ENCODE measurements at regions of chr12 and their contacts with region 1.

Region 1: DNA sequence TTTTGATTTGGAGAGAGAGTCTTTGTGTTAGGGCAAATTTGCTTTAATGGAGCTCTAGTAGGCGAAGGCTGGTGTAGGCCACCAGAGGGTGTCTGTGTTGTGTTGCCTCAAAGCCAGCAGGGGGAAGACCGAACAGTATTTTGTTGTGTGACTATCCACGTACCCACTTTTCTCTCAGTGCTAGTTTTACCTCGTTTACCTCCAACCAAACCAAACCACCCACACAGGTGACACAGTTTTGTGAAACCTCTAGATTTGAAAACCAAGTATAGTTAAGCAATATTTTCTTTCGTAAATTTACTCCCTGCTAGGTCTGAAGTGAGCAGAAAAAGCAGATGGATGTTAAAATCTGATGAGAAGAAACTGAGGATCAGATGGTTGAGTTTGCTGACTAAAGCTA is 36.3 kb upstream of the NPFF start:
- DNase-seq: peak; percentile 47 to 90 (median 75)

Region 2: GRCh38 chr12:53625946-53626701 is 82.6 kb after region 1 on chr12 and contains the start of gene ATF7:
- intact Hi-C with region 1: loop called (anchors 10 kb)
- DNase-seq: peak; percentile 95 to 99 (median 98)

Region 3: GRCh38 chr12:53675651-53676453 is 132.3 kb after region 1 on chr12 and contains the start of gene ATP5MC2:
- intact Hi-C with region 1: loop called (anchors 5 kb)
- DNase-seq: peak; percentile 94 to 99 (median 98)

Region 4: GRCh38 chr12:53746592-53747092 is 203.1 kb after region 1 on chr12:
- intact Hi-C with region 1: loop called (anchors 10 kb)
- DNase-seq: peak; percentile 89 to 98 (median 95)

Measured in head of caudate nucleus (tissue), 42 donors.